Keratinocyte (primary cell): ENCODE measurements at regions of chr19 and their contacts with region 1.

Region 1: GRCh38 chr19:13356686-13357280 is 149.5 kb downstream of the CACNA1A start:
- DNase-seq: no peak
- H3K4me3 ChIP-seq: no peak overlapping the region
- H3K27ac ChIP-seq: no peak overlapping the region
- H3K4me1 ChIP-seq: no peaks in the 10 kb centered on the region
- H3K27me3 ChIP-seq: no peaks in the 10 kb centered on the region
- CTCF ChIP-seq: no peak

Region 2: DNA sequence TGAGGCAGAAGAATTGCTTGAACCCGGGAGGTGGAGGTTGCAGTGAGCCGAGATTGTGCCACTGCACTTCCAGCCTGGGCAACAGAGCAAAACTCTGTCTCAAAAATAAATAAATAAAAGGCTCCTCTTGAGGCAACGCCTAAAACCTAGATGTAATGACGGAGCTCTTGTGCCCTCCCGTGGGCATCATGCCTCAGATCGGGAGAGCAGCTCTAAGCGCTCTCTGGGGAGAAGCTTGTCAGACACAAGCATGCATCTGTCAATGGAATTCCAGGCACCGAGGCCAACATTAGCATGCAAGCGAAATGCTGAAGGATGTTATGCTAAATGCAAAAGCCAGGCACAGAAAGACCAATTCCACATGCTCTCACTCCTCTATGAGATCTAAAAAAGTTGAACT is 361.9 kb after region 1 on chr19:
- dilution Hi-C with region 1: loop called (anchors 10 kb)
- DNase-seq: no peak
- H3K4me3 ChIP-seq: no peak overlapping the region
- H3K27ac ChIP-seq: no peak overlapping the region
- H3K4me1 ChIP-seq: no peaks in the 10 kb centered on the region
- H3K27me3 ChIP-seq: no peaks in the 10 kb centered on the region
- CTCF ChIP-seq: peak; percentile 53 to 78 (median 59)